ENCODE measurements at regions of chr15 and their contacts with region 1.

Region 1: GRCh38 chr15:52789601-52790161 is 455 bp downstream of the ONECUT1 start:
- DNase-seq: no peak
- H3K4me3 ChIP-seq: peak overlapping the region in 56 of 59 donors; percentile 28 to 75 (median 58)
- H3K27ac ChIP-seq: no peak overlapping the region
- H3K27me3 ChIP-seq: peaks cover 15 to 100% (median 85%) of the 10 kb centered on the region in 45 donors
- CTCF ChIP-seq: no peak

Region 2: GRCh38 chr15:52749258-52749657 is 40.4 kb before region 1 on chr15:
- intact Hi-C with region 1: no loop called
- DNase-seq: no peak
- H3K4me3 ChIP-seq: no peak overlapping the region
- H3K27ac ChIP-seq: no peak overlapping the region
- H3K27me3 ChIP-seq: peaks cover 0 to 53% (median 14%) of the 10 kb centered on the region in 45 donors
- CTCF ChIP-seq: no peak

Region 3: DNA sequence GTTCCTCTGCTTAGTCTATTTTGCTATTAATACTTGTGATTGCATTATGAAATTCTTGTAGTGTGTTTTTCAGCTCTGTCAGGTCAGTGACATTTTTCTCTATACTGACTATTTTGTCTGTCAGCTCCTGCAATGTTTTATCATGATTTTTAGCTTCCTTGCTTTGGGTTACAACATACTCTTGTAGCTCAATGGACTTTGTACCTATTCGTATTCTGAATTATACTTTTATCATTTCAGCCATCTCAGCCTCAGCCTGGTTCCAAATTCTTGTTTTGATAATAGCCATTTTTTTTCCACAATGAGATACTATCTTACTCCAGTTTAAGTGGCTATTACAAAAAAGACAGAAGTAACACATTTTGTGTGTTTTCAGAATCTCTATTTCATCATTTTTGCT is 204.6 kb after region 1 on chr15:
- intact Hi-C with region 1: no loop called
- DNase-seq: no peak
- H3K4me3 ChIP-seq: no peak overlapping the region
- H3K27ac ChIP-seq: no peak overlapping the region
- H3K27me3 ChIP-seq: peaks cover 0 to 8% (median 0%) of the 10 kb centered on the region in 45 donors
- CTCF ChIP-seq: no peak

Region 4: DNA sequence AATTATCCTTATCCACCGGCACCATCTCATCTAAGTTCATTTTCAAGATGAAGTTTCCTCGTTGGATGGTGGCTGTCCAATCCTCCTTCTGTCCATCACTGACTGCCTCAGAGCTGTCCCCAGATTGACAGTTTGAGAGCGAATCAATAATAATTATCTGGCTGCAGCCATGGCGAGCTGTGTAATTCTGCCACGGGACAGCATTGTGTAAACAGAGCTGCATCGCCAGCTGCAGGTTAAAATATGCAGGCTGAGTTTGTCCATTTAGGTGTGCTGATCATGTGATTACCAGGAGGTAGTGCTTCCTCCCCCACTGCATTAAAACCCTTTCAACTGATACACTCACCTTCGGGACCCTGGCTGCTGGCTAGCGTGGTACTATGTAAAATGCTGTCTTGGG is 462.3 kb after region 1 on chr15:
- intact Hi-C with region 1: no loop called
- DNase-seq: no peak
- H3K4me3 ChIP-seq: no peak overlapping the region
- H3K27ac ChIP-seq: no peak overlapping the region
- H3K27me3 ChIP-seq: peaks cover 0 to 5% (median 0%) of the 10 kb centered on the region in 45 donors
- CTCF ChIP-seq: no peak

Region 5: DNA sequence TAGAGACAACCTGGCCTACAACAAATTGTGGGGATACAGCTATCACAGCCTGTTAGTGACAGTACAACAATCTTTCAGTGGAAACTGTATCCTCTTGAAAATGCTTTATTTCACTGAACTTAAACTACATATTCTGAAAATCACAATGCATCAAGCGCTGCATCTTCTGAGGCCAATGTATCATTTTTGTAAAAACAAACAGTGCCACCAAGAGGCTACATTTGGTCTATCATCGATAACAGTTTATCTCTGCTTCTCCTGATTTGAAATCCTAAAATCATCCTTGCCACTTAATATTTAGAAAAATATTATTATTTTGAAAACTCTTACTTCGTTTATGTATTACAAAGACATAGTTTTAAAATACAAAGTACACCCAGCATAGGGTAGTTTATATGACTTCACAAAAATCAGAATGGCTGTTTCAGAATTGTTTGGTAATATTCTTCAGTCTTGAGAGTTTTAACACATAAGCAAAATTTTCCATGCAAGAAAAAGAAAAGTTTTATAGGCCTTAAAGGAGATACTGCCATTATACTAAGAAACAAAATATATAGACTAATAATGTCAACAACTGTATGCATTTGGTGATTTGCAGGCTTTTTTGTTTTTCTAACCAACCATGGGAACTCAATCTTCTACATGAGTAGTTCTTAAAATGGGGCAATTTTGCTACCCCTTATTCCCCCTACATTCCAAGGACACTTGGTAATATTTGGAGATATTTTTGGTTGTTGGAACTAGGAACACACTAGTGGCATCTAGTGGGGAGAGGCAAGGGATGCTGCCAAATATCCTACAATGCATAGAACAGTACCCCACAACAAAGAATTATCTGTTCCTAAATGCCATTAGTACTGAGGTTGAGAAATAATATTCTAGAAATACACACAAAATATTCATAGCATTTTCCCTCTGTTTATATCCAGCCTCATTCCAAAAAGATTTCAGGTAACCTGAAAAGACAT is 927.5 kb after region 1 on chr15:
- intact Hi-C with region 1: loop called (anchors 5 kb)
- DNase-seq: no peak
- H3K4me3 ChIP-seq: no peak overlapping the region
- H3K27ac ChIP-seq: no peak overlapping the region
- H3K27me3 ChIP-seq: peaks cover 0 to 42% (median 6%) of the 10 kb centered on the region in 45 donors
- CTCF ChIP-seq: peak in 55 of 56 donors; percentile 12 to 75 (median 53)